Sigmoid colon (tissue), 7 donors: ENCODE measurements at regions of chr22 and their contacts with region 1.

Region 1: GRCh38 chr22:44080936-44081861 is 57.1 kb downstream of the PARVB start:
- DNase-seq: peak; percentile 91
- H3K4me3 ChIP-seq: peak overlapping the region; percentile 17 to 35 (median 30)
- H3K27ac ChIP-seq: peak overlapping the region in 3 of 4 donors; percentile 36 to 51 (median 49)
- H3K4me1 ChIP-seq: peaks cover 0 to 19% (median 14%) of the 10 kb centered on the region in 4 donors
- H3K27me3 ChIP-seq: no peaks in the 10 kb centered on the region
- CTCF ChIP-seq: peak; percentile 76 to 88 (median 86)
- EP300 ChIP-seq: no peak
- POLR2A ChIP-seq: no peak

Region 2: DNA sequence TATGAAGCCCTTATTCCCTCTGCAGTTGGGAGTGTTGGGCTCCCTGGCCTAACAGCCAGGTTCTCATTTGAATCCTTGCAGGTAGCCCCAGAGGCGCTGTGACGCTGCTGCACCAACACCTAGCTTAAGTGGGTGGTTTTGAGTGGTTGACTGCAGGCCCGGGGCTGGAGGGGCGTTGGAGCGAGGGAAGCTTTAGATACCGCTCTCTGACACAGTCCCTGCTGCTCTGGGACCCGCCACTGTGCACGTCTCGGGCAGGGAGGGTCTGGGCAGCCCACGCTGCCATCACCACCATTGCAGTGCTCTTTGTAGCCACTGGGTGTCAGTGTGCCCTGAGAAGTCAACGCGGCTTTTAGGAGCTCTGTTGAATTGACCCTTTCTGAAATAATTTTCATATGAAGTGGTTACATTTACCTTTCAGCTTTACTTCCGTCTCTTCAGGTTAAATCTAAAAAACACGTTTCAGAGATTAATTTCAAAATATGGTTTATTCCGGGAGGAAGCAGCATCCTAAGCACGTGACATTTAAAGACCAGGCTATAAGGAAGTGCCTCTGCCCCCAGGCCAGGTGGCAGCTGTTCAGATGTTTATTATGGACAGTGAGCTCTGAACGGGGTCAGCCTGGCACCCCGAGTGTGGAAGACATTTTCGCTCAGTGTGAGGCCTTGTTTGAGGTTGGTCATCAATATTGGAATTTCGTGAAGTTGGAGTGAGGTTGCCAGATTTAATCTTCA is 88.0 kb before region 1 on chr22:
- intact Hi-C with region 1: loop called (anchors 5 kb)
- DNase-seq: peak; percentile 65
- H3K4me3 ChIP-seq: no peak overlapping the region
- H3K27ac ChIP-seq: no peak overlapping the region
- H3K4me1 ChIP-seq: peaks cover 0 to 8% (median 0%) of the 10 kb centered on the region in 4 donors
- H3K27me3 ChIP-seq: no peaks in the 10 kb centered on the region
- CTCF ChIP-seq: peak; percentile 90 to 95 (median 92)
- EP300 ChIP-seq: no peak
- POLR2A ChIP-seq: no peak

Region 3: DNA sequence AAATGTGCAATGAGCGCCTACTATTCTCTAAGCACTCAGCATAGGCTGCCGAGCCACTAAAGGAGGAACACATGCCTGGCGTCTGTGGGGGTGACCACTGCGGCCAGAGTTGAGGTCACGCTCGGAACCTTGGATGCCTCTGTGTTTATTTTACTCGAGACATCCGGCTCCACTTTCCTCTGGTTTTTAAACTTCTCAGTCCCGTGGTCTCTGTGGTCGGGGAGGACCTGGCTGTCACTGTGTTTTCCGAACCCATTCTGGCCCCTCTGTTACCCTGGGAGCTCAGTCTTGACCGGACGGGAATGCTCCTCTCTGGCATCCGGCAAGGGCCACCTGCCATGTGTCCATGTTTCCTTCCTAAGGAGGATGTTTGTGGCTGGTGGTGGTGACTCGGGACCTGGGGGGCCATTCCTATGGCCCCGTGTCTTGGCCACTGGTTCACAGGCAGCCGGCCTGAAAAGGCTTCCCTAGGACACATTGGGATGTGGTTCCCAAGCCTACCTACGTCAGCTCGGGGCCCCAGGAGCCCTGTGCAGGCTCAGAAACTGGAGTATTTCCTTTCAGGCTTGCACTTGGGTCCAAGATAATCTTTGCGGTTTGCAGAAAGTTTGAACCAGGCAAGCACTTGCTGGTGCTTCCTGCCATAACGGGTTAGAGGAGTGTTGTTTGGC is 52.8 kb after region 1 on chr22:
- intact Hi-C with region 1: no loop called
- DNase-seq: peak; percentile 70
- H3K4me3 ChIP-seq: no peak overlapping the region
- H3K27ac ChIP-seq: peak overlapping the region in 1 of 4 donors; percentile 28
- H3K4me1 ChIP-seq: no peaks in the 10 kb centered on the region
- H3K27me3 ChIP-seq: no peaks in the 10 kb centered on the region
- CTCF ChIP-seq: no peak
- EP300 ChIP-seq: no peak
- POLR2A ChIP-seq: no peak

Region 4: DNA sequence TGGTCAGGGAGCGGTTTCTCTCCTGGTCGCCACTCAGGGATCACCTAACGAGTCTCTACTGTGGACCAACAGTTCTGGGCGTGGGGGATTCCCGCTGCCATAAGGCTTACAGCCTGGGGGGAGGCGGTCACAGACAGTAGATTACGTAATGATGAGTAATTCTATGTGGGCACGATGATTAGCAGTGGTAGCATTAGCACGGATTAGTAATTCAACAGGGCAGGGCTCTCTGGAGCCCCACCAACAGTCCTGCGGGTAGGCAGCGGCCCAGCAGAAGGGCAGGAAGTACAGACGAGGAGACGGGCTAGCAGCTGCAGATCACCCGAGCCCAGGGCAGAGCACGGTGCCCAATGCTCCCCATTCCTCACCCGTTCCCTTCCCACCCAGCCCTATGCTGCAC is 227.9 kb after region 1 on chr22:
- intact Hi-C with region 1: loop called (anchors 5 kb)
- DNase-seq: peak; percentile 84
- H3K4me3 ChIP-seq: peak overlapping the region in 1 of 4 donors; percentile 49
- H3K27ac ChIP-seq: peak overlapping the region; percentile 79 to 98 (median 92)
- H3K4me1 ChIP-seq: peaks cover 0 to 100% (median 96%) of the 10 kb centered on the region in 4 donors
- H3K27me3 ChIP-seq: no peaks in the 10 kb centered on the region
- CTCF ChIP-seq: no peak
- EP300 ChIP-seq: no peak
- POLR2A ChIP-seq: no peak

Region 5: DNA sequence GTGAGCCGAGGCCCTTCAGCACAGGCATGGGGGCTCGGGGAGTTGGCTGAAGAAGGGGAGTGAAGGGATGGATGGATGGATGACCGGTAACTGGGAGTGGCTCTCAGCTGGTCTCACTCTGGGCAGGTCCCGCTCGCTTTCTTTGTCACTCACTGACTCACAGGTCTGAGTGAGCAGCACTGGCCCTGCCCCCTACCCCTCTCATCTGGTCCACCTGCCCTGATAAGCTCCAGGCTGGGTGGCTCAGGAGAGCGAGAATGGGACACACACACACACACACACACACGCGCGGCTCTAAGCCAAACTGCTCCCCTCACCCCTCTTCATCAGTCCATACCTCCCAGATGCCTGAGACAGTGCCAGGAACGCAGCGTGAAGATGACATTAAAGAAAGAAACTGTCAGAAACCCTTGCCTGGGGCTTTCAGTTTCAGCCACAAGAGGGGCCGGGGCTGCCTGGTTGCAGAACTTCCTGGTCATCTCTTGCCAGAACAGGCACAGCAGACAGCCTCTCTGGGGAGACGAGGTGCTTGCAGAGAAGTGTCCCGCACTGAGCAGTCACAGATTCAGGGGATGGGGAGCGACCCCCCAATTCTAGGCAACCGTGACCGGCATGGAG is 248.1 kb after region 1 on chr22:
- intact Hi-C with region 1: loop called (anchors 5 kb)
- DNase-seq: peak; percentile 64
- H3K4me3 ChIP-seq: no peak overlapping the region
- H3K27ac ChIP-seq: peak overlapping the region in 2 of 4 donors; percentile 65 to 68
- H3K4me1 ChIP-seq: peaks cover 0 to 52% (median 39%) of the 10 kb centered on the region in 4 donors
- H3K27me3 ChIP-seq: peaks cover 0 to 4% (median 3%) of the 10 kb centered on the region in 3 donors
- CTCF ChIP-seq: no peak
- EP300 ChIP-seq: no peak
- POLR2A ChIP-seq: no peak

Region 6: DNA sequence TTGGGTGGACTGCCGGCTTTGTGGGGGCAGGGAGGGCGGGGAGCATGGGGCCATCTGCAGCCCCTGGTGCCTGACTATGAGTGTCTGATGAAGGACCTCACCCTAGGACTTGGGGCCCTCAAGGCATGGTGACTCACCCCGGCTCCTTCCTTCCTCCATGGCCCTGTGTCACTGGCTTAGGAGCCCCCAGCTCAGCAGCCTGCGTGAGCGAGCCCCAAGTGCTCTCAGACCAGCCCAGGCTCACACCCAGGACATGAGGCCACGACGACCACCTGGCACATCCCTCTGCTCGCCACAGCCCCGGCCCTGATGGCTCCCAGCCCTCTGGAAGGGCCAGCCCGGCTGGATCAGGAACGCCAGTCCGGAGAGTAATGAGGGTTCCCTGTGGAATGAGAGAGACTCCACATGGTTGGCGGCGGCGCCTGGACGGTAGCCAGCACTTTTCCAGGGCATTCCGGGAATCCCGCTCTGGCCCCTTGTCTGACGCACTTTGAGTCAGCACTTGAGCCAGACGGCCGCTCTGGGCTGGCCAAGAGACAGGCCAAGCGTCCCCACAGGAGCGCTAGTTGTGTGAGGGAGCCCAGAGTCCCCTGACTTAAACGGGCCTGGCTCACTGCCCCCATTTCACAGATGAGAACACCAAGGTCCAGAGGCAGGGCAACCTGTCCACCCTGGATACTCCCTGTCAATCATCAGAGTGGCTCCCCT is 282.2 kb after region 1 on chr22:
- intact Hi-C with region 1: loop called (anchors 5 kb)
- DNase-seq: peak; percentile 97
- H3K4me3 ChIP-seq: no peak overlapping the region
- H3K27ac ChIP-seq: peak overlapping the region; percentile 82 to 87 (median 86)
- H3K4me1 ChIP-seq: peaks cover 0 to 68% (median 59%) of the 10 kb centered on the region in 4 donors
- H3K27me3 ChIP-seq: no peaks in the 10 kb centered on the region
- CTCF ChIP-seq: no peak
- EP300 ChIP-seq: peak; percentile 37 to 89 (median 77)
- POLR2A ChIP-seq: no peak

Region 7: GRCh38 chr22:44567846-44568493 is 486.8 kb after region 1 on chr22:
- intact Hi-C with region 1: loop called (anchors 5 kb)
- DNase-seq: peak; percentile 68
- H3K4me3 ChIP-seq: no peak overlapping the region
- H3K27ac ChIP-seq: no peak overlapping the region
- H3K4me1 ChIP-seq: no peaks in the 10 kb centered on the region
- H3K27me3 ChIP-seq: no peaks in the 10 kb centered on the region
- CTCF ChIP-seq: peak in 3 of 4 experiments; percentile 29 to 56 (median 49)
- EP300 ChIP-seq: no peak
- POLR2A ChIP-seq: no peak

Region 8: GRCh38 chr22:44625981-44626687 is 544.9 kb after region 1 on chr22:
- intact Hi-C with region 1: loop called (anchors 1 kb)
- DNase-seq: peak; percentile 83
- H3K4me3 ChIP-seq: no peak overlapping the region
- H3K27ac ChIP-seq: no peak overlapping the region
- H3K4me1 ChIP-seq: peaks cover 0 to 4% (median 0%) of the 10 kb centered on the region in 4 donors
- H3K27me3 ChIP-seq: peaks cover 0 to 15% (median 9%) of the 10 kb centered on the region in 3 donors
- CTCF ChIP-seq: peak; percentile 98 to 100 (median 99)
- EP300 ChIP-seq: no peak
- POLR2A ChIP-seq: no peak

Region 9: DNA sequence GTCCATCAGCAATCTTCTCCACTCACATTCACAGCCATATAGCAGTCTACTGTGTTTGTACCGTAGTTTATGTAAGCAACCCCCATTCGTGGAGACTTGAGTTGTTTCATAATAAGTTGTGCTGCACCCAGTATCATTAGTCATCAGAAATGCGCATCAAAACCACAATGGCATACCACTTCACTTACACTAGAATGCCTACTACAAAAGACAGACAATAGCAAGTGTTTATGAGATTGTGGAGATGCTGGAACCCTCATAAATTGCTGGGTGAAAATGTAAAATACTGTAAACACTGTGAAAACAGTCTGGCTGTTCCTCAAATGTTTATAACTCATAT is 1723.8 kb after region 1 on chr22:
- intact Hi-C with region 1: no loop called
- DNase-seq: no peak
- H3K4me3 ChIP-seq: no peak overlapping the region
- H3K27ac ChIP-seq: peak overlapping the region in 3 of 4 donors; percentile 60 to 76 (median 72)
- H3K4me1 ChIP-seq: peaks cover 0 to 38% (median 28%) of the 10 kb centered on the region in 4 donors
- H3K27me3 ChIP-seq: no peaks in the 10 kb centered on the region
- CTCF ChIP-seq: no peak
- EP300 ChIP-seq: peak in 1 of 4 donors; percentile 11
- POLR2A ChIP-seq: no peak